Sigmoid colon (tissue), 7 donors: ENCODE measurements at regions of chr4 and their contacts with region 1.

Region 1: GRCh38 chr4:27010334-27010940 is 149.8 kb downstream of the STIM2 start:
- DNase-seq: peak; percentile 74
- H3K4me3 ChIP-seq: no peak overlapping the region
- H3K27ac ChIP-seq: peak overlapping the region in 2 of 4 donors; percentile 13 to 22
- H3K4me1 ChIP-seq: peaks cover 0 to 53% (median 24%) of the 10 kb centered on the region in 4 donors
- H3K27me3 ChIP-seq: no peaks in the 10 kb centered on the region
- CTCF ChIP-seq: peak; percentile 63 to 88 (median 84)
- EP300 ChIP-seq: no peak
- POLR2A ChIP-seq: no peak

Region 2: GRCh38 chr4:25981749-25982148 is 1028.7 kb before region 1 on chr4:
- intact Hi-C with region 1: loop called (anchors 10 kb)
- DNase-seq: no peak
- H3K4me3 ChIP-seq: no peak overlapping the region
- H3K27ac ChIP-seq: no peak overlapping the region
- H3K4me1 ChIP-seq: no peaks in the 10 kb centered on the region
- H3K27me3 ChIP-seq: no peaks in the 10 kb centered on the region
- CTCF ChIP-seq: no peak
- EP300 ChIP-seq: no peak
- POLR2A ChIP-seq: no peak

Region 3: DNA sequence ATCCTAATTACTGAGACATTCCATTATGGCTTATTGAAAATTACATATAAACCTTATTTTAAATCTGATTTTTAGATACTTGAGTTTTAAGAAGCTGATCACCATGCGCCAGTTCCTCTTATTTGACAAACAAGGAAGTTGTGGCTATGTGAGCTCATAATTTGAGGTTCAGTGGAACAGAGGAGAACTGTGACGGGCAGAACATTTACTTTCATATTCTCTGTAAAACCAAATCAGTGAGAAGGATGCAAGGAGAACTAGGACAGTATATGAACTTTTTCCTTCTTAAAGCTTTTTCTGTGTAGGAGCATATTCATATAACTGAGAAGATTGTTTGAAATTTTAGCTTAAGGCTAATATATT is 124.5 kb before region 1 on chr4:
- intact Hi-C with region 1: no loop called
- DNase-seq: no peak
- H3K4me3 ChIP-seq: no peak overlapping the region
- H3K27ac ChIP-seq: no peak overlapping the region
- H3K4me1 ChIP-seq: peaks cover 0 to 10% (median 0%) of the 10 kb centered on the region in 4 donors
- H3K27me3 ChIP-seq: no peaks in the 10 kb centered on the region
- CTCF ChIP-seq: no peak
- EP300 ChIP-seq: no peak
- POLR2A ChIP-seq: no peak